Right cardiac atrium (tissue), 5 donors: ENCODE measurements at regions of chrX and their contacts with region 1.

Region 1: GRCh38 chrX:39149761-39150160 is 348.5 kb downstream of the MID1IP1 start:
- DNase-seq: peak; percentile 71 to 93 (median 87)
- ATAC-seq: peak; percentile 73 to 75
- H3K4me3 ChIP-seq: no peak overlapping the region
- H3K27ac ChIP-seq: no peak overlapping the region
- H3K4me1 ChIP-seq: no peaks in the 10 kb centered on the region
- H3K27me3 ChIP-seq: no peaks in the 10 kb centered on the region

Region 2: GRCh38 chrX:38754102-38754790 is 395.5 kb before region 1 on chrX:
- intact Hi-C with region 1: loop called in 1 of 4 experiments (anchors 10 kb)
- DNase-seq: no peak
- ATAC-seq: peak in 1 of 2 donors; percentile 64
- H3K4me3 ChIP-seq: no peak overlapping the region
- H3K27ac ChIP-seq: no peak overlapping the region
- H3K4me1 ChIP-seq: no peaks in the 10 kb centered on the region
- H3K27me3 ChIP-seq: no peaks in the 10 kb centered on the region

Region 3: GRCh38 chrX:39675601-39676000 is 525.8 kb after region 1 on chrX:
- intact Hi-C with region 1: no loop called
- DNase-seq: peak; percentile 81 to 86 (median 82)
- ATAC-seq: peak; percentile 69 to 75
- H3K4me3 ChIP-seq: no peak overlapping the region
- H3K27ac ChIP-seq: no peak overlapping the region
- H3K4me1 ChIP-seq: peaks cover 3% of the 10 kb centered on the region
- H3K27me3 ChIP-seq: no peaks in the 10 kb centered on the region